ENCODE measurements at regions of chr2 and their contacts with region 1.

Region 1: DNA sequence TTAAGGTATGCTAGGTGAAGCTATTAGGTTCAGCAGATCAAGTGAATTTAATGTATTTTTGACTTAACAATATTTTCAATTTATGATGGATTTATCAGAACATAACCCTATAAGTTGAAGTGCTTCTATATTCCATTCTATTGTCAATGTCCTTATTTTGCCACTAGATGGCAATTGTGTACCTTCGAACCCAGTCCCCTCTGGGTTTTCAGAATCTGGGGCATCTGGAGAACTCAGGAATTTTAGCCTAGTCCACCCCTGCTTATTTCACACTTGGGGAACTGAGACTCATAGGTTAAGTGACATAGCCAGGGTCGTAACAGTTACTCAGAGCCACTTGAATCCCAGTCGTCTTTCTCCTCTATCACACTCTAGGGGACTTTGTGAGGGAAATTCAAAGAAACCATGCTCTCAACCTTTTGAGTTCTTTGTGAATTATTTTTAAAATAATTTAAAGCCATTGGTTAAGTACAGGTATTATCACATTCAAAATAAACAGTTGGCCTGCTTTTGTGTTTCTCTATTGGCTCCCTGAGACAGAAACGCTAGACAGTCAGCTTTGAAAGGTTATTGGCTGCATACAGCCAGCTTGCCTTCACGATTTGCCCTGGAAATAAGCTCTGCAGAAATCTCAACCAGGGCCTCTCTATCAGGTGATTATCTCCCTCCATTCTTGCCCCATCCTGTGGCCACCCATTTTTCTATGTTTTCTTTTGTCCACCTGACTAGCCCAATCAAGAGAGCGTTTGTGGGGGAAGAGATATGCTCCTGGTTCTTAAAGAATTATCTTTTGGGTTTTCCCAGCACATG is 145.0 kb downstream of the TTC27 start:
- DNase-seq: peak; percentile 19
- H3K4me3 ChIP-seq: no peak overlapping the region
- H3K27ac ChIP-seq: no peak overlapping the region
- H3K4me1 ChIP-seq: no peaks in the 10 kb centered on the region
- H3K27me3 ChIP-seq: no peaks in the 10 kb centered on the region
- CTCF ChIP-seq: peak; percentile 36 to 66

Region 2: DNA sequence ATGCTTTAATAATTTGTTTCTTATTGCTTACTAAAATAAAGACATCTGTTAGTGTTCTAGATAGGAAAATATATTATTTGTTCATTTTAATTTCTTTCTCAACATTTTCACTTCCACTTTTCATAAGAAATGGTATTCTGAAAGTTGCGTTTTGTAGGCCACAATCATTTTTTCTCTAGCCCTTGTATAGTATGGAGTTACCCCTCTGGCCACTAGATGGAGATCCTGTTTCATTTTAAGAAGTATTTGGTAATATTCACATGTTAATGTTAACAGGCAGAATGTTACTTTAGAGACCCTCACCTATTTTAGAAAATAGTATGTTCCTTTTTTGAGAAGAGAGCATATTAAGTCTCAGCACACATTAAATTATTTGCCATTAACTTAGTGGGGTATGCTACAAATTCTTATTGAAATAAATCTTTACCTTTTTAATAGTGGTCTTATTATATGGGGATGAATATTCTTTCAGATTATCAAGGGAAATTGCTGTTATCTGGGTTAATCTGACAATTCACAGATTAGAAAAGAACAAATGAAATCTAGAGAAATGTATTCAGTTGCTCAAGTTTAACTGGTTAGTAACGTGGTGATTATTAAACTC is 218.9 kb before region 1 on chr2:
- CTCF ChIA-PET with region 1: no interaction called
- dilution Hi-C with region 1: no loop called
- in situ Hi-C with region 1: no loop called
- intact Hi-C with region 1: loop called (anchors 1 kb)
- DNase-seq: peak; percentile 6
- H3K4me3 ChIP-seq: no peak overlapping the region
- H3K27ac ChIP-seq: no peak overlapping the region
- H3K4me1 ChIP-seq: no peaks in the 10 kb centered on the region
- H3K27me3 ChIP-seq: no peaks in the 10 kb centered on the region
- CTCF ChIP-seq: peak; percentile 53 to 72

Measured in mammary epithelial cell (primary cell).